Vagina (tissue), 2 donors: ENCODE measurements at regions of chr12 and their contacts with region 1.

Region 1: DNA sequence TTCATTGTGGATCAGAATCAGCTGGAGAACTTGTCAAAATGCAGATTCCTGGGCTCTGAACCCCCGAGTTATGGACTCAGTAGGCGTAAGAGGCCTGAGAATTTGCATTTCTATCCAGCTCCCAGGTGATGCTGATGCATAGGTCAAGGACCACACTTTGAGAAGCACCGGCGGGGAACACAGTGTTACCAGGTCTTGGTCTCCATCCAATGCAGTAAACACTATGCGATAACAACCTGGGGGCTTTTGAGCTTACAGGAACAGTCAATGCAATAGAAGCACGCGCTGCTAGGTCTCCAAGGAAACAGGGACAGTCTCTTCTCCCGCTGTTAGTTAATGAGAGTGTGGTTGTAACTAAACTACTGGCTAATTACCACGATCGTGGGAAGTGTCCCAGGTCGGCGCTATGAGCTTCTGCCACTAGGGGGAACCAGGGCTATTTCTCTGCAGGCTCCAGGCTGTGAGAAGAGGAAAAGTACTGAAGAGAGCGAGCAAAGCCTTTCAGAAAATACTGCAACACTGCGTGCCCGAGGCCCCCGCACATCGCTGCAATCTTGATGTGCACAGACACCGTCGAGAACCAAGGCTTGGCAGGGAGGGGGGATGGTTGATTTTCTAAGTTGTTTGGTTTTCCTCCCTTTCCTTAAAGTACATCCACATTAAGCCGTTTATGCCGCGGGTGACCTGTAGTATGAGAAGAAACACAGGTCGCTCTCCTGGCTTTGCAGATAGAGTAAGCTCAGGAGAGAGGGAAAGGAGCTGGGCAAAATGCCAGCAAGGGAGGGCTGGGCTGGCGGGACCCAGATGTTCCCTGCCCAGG is 52.0 kb upstream of the KCNA1 start:
- DNase-seq: no peak
- H3K4me3 ChIP-seq: peak overlapping the region in 1 of 2 donors; percentile 8
- H3K27ac ChIP-seq: no peak overlapping the region
- H3K4me1 ChIP-seq: peaks cover 13% of the 10 kb centered on the region
- H3K27me3 ChIP-seq: no peaks in the 10 kb centered on the region
- CTCF ChIP-seq: peak; percentile 60 to 93 (median 75)
- POLR2A ChIP-seq: no peak

Region 2: DNA sequence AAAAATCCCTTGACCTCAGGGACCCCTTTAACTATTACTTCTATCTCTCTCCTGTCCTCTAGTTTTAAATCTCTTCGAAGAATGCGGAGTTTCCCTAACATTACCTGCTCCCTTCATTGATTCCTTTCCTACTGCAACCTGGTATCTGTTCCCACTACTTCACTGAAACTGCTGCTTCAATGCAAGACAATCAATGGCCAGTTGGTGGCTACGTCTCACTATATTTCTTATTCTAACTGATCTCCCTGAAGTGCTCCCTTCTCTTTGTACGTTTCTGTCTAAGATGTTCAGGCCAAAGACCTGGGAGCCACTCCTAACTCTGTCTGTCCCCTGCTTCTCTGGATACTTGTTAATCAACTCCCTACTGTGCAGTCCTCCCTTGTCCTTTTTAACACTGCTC is 41.7 kb after region 1 on chr12:
- intact Hi-C with region 1: no loop called
- DNase-seq: no peak
- H3K4me3 ChIP-seq: no peak overlapping the region
- H3K27ac ChIP-seq: no peak overlapping the region
- H3K4me1 ChIP-seq: no peaks in the 10 kb centered on the region
- H3K27me3 ChIP-seq: no peaks in the 10 kb centered on the region
- CTCF ChIP-seq: no peak
- POLR2A ChIP-seq: no peak

Region 3: GRCh38 chr12:5003020-5003666 is 145.5 kb after region 1 on chr12:
- intact Hi-C with region 1: loop called (anchors 10 kb)
- DNase-seq: no peak
- H3K4me3 ChIP-seq: no peak overlapping the region
- H3K27ac ChIP-seq: no peak overlapping the region
- H3K4me1 ChIP-seq: peaks cover 4% of the 10 kb centered on the region
- H3K27me3 ChIP-seq: no peaks in the 10 kb centered on the region
- CTCF ChIP-seq: peak; percentile 50 to 78 (median 67)
- POLR2A ChIP-seq: no peak

Region 4: DNA sequence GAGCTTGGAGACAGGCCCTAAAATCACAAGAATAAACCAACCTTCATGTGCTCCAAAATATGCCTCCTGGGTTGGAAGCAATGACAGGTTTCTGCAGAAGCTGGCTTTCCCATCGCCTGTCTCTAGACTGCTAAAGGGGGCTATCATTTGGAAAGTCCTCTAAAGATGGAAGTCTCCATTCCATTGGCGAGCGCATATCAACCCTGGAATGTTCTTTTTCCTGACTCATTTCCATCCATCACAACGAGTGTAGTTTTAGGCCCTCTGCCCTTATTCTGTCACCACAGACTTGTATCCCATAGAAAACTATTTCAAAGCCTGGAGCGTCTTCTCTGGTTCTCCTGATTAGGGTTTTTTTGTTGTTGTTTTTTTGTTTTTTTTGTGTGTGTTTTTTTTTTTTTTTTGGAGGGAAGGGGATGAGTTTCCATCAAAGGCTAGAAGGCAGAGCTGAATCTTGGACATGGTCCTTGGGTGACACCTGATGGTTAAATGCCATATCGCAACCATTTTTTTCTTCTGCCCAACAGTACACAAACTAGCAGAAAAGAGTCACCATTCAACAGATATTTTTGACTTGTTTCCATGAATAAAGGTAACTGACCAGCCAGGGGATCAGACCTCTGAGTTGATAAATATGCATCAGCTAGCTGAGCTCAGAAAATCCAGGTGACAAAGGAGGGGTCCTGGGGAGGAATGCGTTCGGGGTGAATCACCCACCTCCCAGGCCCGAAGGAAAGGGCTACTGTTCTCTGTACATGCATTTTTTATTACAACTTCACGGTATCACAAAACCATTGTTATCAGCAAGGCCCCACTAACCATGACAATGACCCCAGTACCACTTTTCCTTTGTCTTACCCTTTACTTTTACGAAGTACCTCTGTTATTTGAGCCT is 226.5 kb after region 1 on chr12:
- intact Hi-C with region 1: loop called (anchors 10 kb)
- DNase-seq: no peak
- H3K4me3 ChIP-seq: no peak overlapping the region
- H3K27ac ChIP-seq: no peak overlapping the region
- H3K4me1 ChIP-seq: no peaks in the 10 kb centered on the region
- H3K27me3 ChIP-seq: no peaks in the 10 kb centered on the region
- CTCF ChIP-seq: peak; percentile 33 to 45 (median 42)
- POLR2A ChIP-seq: no peak